Heart right ventricle (tissue), 16 donors: ENCODE measurements at regions of chr11 and their contacts with region 1.

Region 1: DNA sequence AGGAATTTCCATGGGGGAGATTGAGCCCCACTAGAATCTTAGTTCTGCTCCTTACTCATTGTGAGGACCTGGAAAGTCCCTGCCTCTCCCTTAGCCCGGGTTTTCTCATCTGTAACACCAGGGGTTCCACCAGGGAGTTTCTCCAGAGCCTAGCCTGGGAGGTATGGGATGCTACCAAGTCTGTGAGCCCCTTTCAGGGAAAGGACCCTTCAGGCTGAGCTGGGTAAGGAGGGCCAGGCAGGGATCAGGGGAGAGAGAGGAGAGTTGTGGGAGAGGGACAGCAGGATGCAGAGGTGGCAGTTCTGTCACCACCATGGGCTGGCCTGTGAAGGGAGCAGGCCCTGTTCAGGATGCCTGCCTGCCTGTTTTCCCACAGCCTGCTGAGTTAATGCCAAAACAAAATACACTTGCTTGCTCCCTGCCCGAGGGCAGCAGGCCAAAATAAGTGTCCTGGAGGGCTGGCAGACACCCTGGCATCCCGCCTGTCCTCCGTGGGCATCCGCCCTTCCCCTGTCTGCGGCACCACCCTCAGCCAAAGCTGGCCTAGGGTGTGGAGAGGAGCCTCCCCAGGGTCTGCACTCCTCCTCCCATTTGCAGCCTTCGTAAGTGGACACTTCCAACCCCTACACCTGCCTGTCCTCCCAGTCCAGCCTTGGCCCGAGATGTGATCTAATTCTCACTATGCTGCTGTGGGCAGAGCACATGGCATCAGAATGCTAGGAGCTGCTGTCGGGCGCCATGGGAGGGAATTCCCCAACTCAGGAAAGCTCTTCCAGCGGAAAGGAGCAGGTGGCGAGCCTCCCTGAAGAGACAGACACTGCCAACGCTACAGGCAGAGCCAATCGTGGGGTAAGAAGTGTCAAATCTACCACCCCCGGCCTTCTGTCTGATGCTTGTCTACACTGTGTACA is 5.9 kb upstream of the FCHSD2 start:
- DNase-seq: peak; percentile 76 to 79
- ATAC-seq: peak; percentile 74 to 91 (median 84)
- H3K4me3 ChIP-seq: peak overlapping the region in 5 of 10 donors; percentile 4 to 30 (median 28)
- H3K27ac ChIP-seq: peak overlapping the region; percentile 64 to 91 (median 80)
- H3K4me1 ChIP-seq: peaks cover 5 to 82% (median 40%) of the 10 kb centered on the region in 9 donors
- H3K27me3 ChIP-seq: no peaks in the 10 kb centered on the region
- CTCF ChIP-seq: no peak

Region 2: GRCh38 chr11:73177778-73178577 is 30.0 kb after region 1 on chr11:
- intact Hi-C with region 1: loop called in 6 of 10 experiments (anchors 2 to 5 kb)
- DNase-seq: peak; percentile 85 to 88
- ATAC-seq: peak; percentile 60 to 86 (median 74)
- H3K4me3 ChIP-seq: no peak overlapping the region
- H3K27ac ChIP-seq: peak overlapping the region; percentile 69 to 92 (median 86)
- H3K4me1 ChIP-seq: peaks cover 27 to 74% (median 51%) of the 10 kb centered on the region in 9 donors
- H3K27me3 ChIP-seq: no peaks in the 10 kb centered on the region
- CTCF ChIP-seq: peak; percentile 71 to 94 (median 86)

Region 3: DNA sequence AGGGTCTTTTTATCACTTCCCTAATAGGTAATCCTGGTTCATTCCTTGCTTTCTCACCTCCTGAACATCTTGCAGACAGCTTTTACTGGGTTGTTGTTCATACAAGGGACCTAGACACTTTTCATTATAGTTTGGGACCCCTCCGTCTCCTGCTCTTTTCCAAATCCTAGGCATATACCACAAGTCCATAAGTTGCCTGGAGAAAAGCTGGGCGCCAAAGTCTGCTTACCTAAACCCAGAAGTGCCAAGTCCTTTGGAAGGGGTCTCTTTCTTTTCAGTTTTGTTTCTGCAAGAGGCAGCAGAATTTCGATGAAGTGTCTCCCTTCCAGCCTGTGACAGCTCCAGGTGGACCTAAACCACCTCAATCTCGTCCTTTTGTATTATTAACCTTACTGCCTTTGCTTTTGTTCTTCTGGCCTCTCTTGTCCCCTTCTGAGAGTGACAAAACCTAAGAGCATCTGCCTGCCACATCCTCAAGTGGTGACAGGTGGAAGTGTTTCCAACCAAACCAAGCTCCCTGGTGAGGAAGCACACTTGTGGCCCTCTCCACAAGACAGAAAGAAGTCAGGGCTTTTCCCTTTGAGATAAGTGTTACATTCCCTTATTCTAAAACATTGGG is 104.7 kb after region 1 on chr11:
- intact Hi-C with region 1: no loop called
- DNase-seq: no peak
- ATAC-seq: no peak
- H3K4me3 ChIP-seq: no peak overlapping the region
- H3K27ac ChIP-seq: no peak overlapping the region
- H3K4me1 ChIP-seq: peaks cover 3 to 9% (median 5%) of the 10 kb centered on the region in 9 donors
- H3K27me3 ChIP-seq: no peaks in the 10 kb centered on the region
- CTCF ChIP-seq: no peak